ENCODE measurements at regions of chr7 and their contacts with region 1.

Region 1: GRCh38 chr7:151104411-151105235 is 18.3 kb downstream of the AGAP3 start:
- DNase-seq: no peak
- ATAC-seq: no peak
- H3K4me3 ChIP-seq: no peak overlapping the region
- H3K4me3 Mint-ChIP-seq: no peak overlapping the region
- H3K27ac ChIP-seq: no peak overlapping the region
- H3K27ac Mint-ChIP-seq: no peak overlapping the region
- H3K4me1 ChIP-seq: no peaks in the 10 kb centered on the region
- H3K4me1 Mint-ChIP-seq: no peaks in the 10 kb centered on the region
- H3K27me3 ChIP-seq: no peaks in the 10 kb centered on the region
- H3K27me3 Mint-ChIP-seq: no peaks in the 10 kb centered on the region

Region 2: DNA sequence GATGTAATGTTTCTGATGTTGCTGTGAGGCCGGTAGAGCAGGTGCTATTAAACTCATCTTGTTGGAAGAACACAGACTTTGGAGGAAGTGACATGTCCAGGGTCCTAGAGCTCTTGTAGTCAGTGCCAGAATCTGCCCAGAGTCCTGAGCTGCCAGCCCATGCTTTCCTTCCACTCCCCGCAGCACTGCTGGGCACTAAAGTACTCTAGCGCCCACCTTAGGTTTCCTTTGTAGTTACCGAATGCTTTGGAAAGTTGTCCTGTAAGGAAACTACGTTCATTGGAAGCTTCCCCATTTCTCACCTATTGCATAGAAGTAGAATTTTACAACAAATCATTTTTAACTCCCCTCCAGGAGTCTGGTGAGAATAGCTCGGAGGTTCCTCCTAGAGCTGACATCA is 1255.4 kb before region 1 on chr7:
- CTCF ChIA-PET with region 1: no interaction called
- POLR2A ChIA-PET with region 1: interaction called in 1 of 2 experiments, 12 read pairs
- DNase-seq: no peak
- ATAC-seq: no peak
- H3K4me3 ChIP-seq: no peak overlapping the region
- H3K4me3 Mint-ChIP-seq: peak overlapping the region in 1 of 3 donors; percentile 47
- H3K27ac ChIP-seq: no peak overlapping the region
- H3K27ac Mint-ChIP-seq: no peak overlapping the region
- H3K4me1 ChIP-seq: peaks cover 15 to 28% of the 10 kb centered on the region in 2 experiments
- H3K4me1 Mint-ChIP-seq: peaks cover 42 to 57% (median 42%) of the 10 kb centered on the region in 3 donors
- H3K27me3 ChIP-seq: no peaks in the 10 kb centered on the region
- H3K27me3 Mint-ChIP-seq: no peaks in the 10 kb centered on the region

Region 3: GRCh38 chr7:151017953-151018420 is 86.6 kb before region 1 on chr7:
- CTCF ChIA-PET with region 1: no interaction called
- POLR2A ChIA-PET with region 1: no interaction called
- DNase-seq: peak; percentile 43 to 87 (median 72)
- ATAC-seq: peak; percentile 56 to 76 (median 64)
- H3K4me3 ChIP-seq: peak overlapping the region; percentile 49 to 53
- H3K4me3 Mint-ChIP-seq: peak overlapping the region; percentile 77 to 84 (median 83)
- H3K27ac ChIP-seq: peak overlapping the region; percentile 41
- H3K27ac Mint-ChIP-seq: peak overlapping the region; percentile 63 to 98
- H3K4me1 ChIP-seq: peaks cover 25 to 65% of the 10 kb centered on the region in 2 experiments
- H3K4me1 Mint-ChIP-seq: peaks cover 54 to 62% (median 61%) of the 10 kb centered on the region in 3 donors
- H3K27me3 ChIP-seq: peaks cover 5 to 42% of the 10 kb centered on the region in 2 experiments
- H3K27me3 Mint-ChIP-seq: peaks cover 0 to 15% of the 10 kb centered on the region in 2 donors

Region 4: GRCh38 chr7:151244196-151244840 is 139.7 kb after region 1 on chr7:
- CTCF ChIA-PET with region 1: no interaction called
- POLR2A ChIA-PET with region 1: no interaction called
- DNase-seq: peak in 23 of 35 experiments; percentile 30 to 82 (median 48)
- ATAC-seq: no peak
- H3K4me3 ChIP-seq: peak overlapping the region in 1 of 2 donors; percentile 44
- H3K4me3 Mint-ChIP-seq: peak overlapping the region; percentile 65 to 87 (median 72)
- H3K27ac ChIP-seq: no peak overlapping the region
- H3K27ac Mint-ChIP-seq: no peak overlapping the region
- H3K4me1 ChIP-seq: peaks cover 15 to 50% of the 10 kb centered on the region in 2 experiments
- H3K4me1 Mint-ChIP-seq: peaks cover 37 to 50% (median 45%) of the 10 kb centered on the region in 3 donors
- H3K27me3 ChIP-seq: peaks cover 0 to 51% of the 10 kb centered on the region in 2 experiments
- H3K27me3 Mint-ChIP-seq: peaks cover 15 to 23% of the 10 kb centered on the region in 2 donors

Measured in T-cell (primary cell).